ENCODE measurements at regions of chr12 and their contacts with region 1.

Region 1: GRCh38 chr12:65556681-65557437 is 267.4 kb upstream of the HMGA2 start:
- DNase-seq: peak; percentile 79
- H3K4me3 Mint-ChIP-seq: no peak overlapping the region
- H3K27ac Mint-ChIP-seq: no peak overlapping the region
- H3K4me1 Mint-ChIP-seq: no peaks in the 10 kb centered on the region
- H3K27me3 Mint-ChIP-seq: peaks cover 17% of the 10 kb centered on the region

Region 2: DNA sequence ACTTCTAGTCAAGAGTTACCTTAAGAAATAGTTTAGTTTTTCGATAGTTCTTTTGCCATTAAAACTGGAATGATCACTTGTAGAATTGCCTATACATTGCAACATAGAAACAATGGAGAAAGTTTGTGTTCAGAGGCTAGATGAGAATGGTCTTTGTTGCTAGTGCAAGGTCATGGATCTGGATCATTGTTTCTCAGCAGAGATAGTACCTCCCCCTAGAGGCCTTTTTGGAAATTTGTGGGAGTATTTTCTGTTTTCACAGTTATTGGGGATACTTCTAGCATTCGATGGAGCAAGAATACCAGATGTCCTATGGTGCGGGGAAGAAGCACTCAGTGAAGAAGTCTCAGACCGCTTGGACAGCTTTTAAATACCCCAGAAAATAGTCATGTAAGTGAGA is 128.7 kb after region 1 on chr12:
- CTCF ChIA-PET with region 1: interaction called, 7 read pairs
- intact Hi-C with region 1: loop called (anchors 1 kb)
- DNase-seq: no peak
- H3K4me3 Mint-ChIP-seq: no peak overlapping the region
- H3K27ac Mint-ChIP-seq: no peak overlapping the region
- H3K4me1 Mint-ChIP-seq: no peaks in the 10 kb centered on the region
- H3K27me3 Mint-ChIP-seq: peaks cover 6% of the 10 kb centered on the region

Region 3: GRCh38 chr12:65986047-65986446 is 429.2 kb after region 1 on chr12:
- CTCF ChIA-PET with region 1: no interaction called
- intact Hi-C with region 1: loop called (anchors 1 kb)
- DNase-seq: no peak
- H3K4me3 Mint-ChIP-seq: no peak overlapping the region
- H3K27ac Mint-ChIP-seq: no peak overlapping the region
- H3K4me1 Mint-ChIP-seq: no peaks in the 10 kb centered on the region
- H3K27me3 Mint-ChIP-seq: peaks cover 5% of the 10 kb centered on the region

Region 4: DNA sequence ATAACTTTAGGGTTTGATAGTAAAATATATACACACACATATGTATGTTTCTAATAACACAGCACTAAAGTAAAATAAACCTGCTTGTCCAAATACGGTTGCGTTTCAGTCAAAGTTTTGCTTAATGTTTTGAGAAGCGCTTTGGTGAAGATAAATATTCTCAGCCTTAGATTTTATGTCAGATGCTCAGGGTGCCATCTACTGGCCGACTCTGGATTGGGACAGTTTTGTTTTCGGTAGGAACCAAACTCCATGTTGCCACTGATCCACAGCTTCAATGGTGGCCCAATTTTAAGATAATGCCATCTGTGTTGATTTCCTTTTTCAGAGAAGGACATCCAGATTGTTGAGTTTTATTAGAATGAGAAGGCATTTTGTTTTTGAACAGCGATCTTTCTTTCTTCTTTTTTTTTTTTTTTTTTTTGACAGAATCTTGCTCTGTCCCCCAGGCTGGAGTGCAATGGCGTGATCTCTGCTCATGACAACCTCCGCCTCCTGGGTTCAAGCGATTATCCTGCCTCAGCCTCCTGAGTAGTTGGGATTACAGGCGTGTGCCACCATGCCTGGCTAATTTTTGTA is 530.6 kb after region 1 on chr12:
- CTCF ChIA-PET with region 1: interaction called, 6 read pairs
- intact Hi-C with region 1: loop called (anchors 1 kb)
- DNase-seq: peak; percentile 81
- H3K4me3 Mint-ChIP-seq: no peak overlapping the region
- H3K27ac Mint-ChIP-seq: no peak overlapping the region
- H3K4me1 Mint-ChIP-seq: no peaks in the 10 kb centered on the region
- H3K27me3 Mint-ChIP-seq: peaks cover 12% of the 10 kb centered on the region